ENCODE measurements at regions of chr4 and their contacts with region 1.

Region 1: GRCh38 chr4:94653984-94654609 is 103.7 kb upstream of the BMPR1B start:
- DNase-seq: no peak

Region 2: DNA sequence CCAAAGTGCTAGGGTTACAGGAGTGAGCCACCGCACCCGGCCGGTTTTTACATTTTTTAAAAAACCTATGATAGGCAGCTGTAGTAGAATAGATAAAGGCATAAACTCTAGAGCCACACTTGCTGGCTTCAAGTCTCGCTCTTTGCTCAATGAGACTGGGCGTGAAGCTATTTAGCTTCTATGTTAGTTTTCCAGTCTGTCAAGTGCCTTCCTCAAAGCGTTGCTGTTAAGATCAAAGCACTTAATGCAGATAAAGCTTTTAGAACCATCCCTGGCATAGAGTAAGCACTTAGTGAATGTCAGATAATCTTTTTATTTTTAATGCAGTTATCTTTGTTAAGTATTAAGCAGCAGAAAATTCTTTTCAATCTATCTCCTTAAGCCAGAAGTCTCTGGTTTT is 61.6 kb after region 1 on chr4:
- intact Hi-C with region 1: loop called in 1 of 2 experiments (anchors 2 kb)
- DNase-seq: no peak